CD8-positive, alpha-beta T cell (primary cell): ENCODE measurements at regions of chr3 and their contacts with region 1.

Region 1: GRCh38 chr3:156674046-156674910 is at the start of gene TIPARP:
- DNase-seq: peak; percentile 98 to 100 (median 99)
- ATAC-seq: peak; percentile 82
- H3K4me3 ChIP-seq: peak within 1 kb of the TSS; percentile 84 to 95
- H3K4me3 Mint-ChIP-seq: peak within 1 kb of the TSS; percentile 97
- H3K27ac ChIP-seq: peak within 1 kb of the TSS; percentile 79 to 89
- H3K27ac Mint-ChIP-seq: peak within 1 kb of the TSS; percentile 99
- H3K4me1 ChIP-seq: peaks cover 34% of the 10 kb centered on the region
- H3K4me1 Mint-ChIP-seq: peaks cover 47% of the 10 kb centered on the region
- H3K27me3 ChIP-seq: no peaks in the 10 kb centered on the region
- H3K27me3 Mint-ChIP-seq: no peaks in the 10 kb centered on the region
- CTCF ChIP-seq: peak; percentile 36
- total RNA-seq, gene TIPARP: 265 to 268 TPM

Region 2: GRCh38 chr3:155854141-155854940 is 819.9 kb before region 1 on chr3 and contains the start of gene SLC33A1:
- CTCF ChIA-PET with region 1: no interaction called
- POLR2A ChIA-PET with region 1: no interaction called
- intact Hi-C with region 1: loop called in 1 of 2 experiments (anchors 10 kb)
- DNase-seq: peak; percentile 96 to 100 (median 99)
- ATAC-seq: peak; percentile 89
- H3K4me3 ChIP-seq: peak within 1 kb of the TSS; percentile 85 to 92
- H3K4me3 Mint-ChIP-seq: peak within 1 kb of the TSS; percentile 98
- H3K27ac ChIP-seq: peak within 1 kb of the TSS; percentile 90 to 95
- H3K27ac Mint-ChIP-seq: peak within 1 kb of the TSS; percentile 99
- H3K4me1 ChIP-seq: peaks cover 33% of the 10 kb centered on the region
- H3K4me1 Mint-ChIP-seq: peaks cover 39% of the 10 kb centered on the region
- H3K27me3 ChIP-seq: no peaks in the 10 kb centered on the region
- H3K27me3 Mint-ChIP-seq: no peaks in the 10 kb centered on the region
- CTCF ChIP-seq: no peak
- total RNA-seq, gene SLC33A1: 12.6 to 12.9 TPM

Region 3: DNA sequence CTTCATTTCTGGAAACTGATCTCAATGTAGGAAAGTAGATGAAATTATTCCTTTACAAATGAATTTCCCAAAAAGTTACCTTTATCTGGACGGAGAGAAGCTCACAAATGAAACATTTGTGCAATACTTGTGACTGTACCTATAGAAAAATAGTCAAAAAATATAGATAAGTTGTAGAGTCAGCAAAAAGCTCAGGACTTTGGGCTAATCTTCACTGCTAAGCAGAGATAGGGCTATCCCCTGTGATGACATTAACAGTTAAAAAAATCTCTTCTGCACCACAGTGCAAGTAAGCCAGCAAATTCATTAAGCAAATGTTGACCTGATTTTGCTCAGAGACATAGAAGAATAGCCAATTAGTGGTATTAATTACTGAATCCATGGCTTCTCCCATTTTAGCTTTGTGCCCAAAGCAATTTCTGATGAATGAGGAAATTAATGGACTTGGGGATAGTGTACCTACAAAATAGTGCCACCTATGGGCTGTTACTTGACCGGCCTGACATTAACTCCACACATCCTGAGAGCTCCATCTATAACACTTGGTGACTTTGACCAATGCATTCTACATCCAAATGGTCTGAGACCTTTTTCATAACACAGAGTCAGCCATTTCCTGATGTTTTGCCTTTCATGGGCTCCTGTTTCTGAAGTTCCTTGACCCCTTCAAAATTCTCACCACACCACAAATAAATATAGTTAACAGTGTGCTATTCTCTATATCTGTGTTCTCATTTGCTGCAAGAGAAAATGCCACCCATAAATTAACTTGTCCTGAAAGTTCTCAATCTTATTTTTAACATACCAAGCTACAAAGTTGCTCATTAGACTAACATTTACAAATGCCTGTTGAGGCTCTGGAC is 224.3 kb before region 1 on chr3:
- CTCF ChIA-PET with region 1: no interaction called
- POLR2A ChIA-PET with region 1: no interaction called
- intact Hi-C with region 1: no loop called
- DNase-seq: peak in 2 of 9 experiments; percentile 16 to 29
- ATAC-seq: no peak
- H3K4me3 ChIP-seq: no peak overlapping the region
- H3K4me3 Mint-ChIP-seq: no peak overlapping the region
- H3K27ac ChIP-seq: no peak overlapping the region
- H3K27ac Mint-ChIP-seq: no peak overlapping the region
- H3K4me1 ChIP-seq: no peaks in the 10 kb centered on the region
- H3K4me1 Mint-ChIP-seq: no peaks in the 10 kb centered on the region
- H3K27me3 ChIP-seq: no peaks in the 10 kb centered on the region
- H3K27me3 Mint-ChIP-seq: no peaks in the 10 kb centered on the region
- CTCF ChIP-seq: peak; percentile 14

Region 4: GRCh38 chr3:156483961-156484787 is 190.1 kb before region 1 on chr3:
- CTCF ChIA-PET with region 1: interaction called, 3 read pairs
- POLR2A ChIA-PET with region 1: no interaction called
- intact Hi-C with region 1: loop called in 1 of 2 experiments (anchors 5 kb)
- DNase-seq: peak in 8 of 9 experiments; percentile 16 to 81 (median 58)
- ATAC-seq: peak; percentile 85
- H3K4me3 ChIP-seq: peak overlapping the region; percentile 21 to 36
- H3K4me3 Mint-ChIP-seq: peak overlapping the region; percentile 74
- H3K27ac ChIP-seq: peak overlapping the region; percentile 28 to 82
- H3K27ac Mint-ChIP-seq: peak overlapping the region; percentile 93
- H3K4me1 ChIP-seq: peaks cover 24% of the 10 kb centered on the region
- H3K4me1 Mint-ChIP-seq: peaks cover 42% of the 10 kb centered on the region
- H3K27me3 ChIP-seq: no peaks in the 10 kb centered on the region
- H3K27me3 Mint-ChIP-seq: no peaks in the 10 kb centered on the region
- CTCF ChIP-seq: no peak

Region 5: GRCh38 chr3:156691920-156692319 is 17.6 kb after region 1 on chr3:
- CTCF ChIA-PET with region 1: no interaction called
- POLR2A ChIA-PET with region 1: interaction called, 3 read pairs
- intact Hi-C with region 1: loop called in 1 of 2 experiments (anchors 2 kb)
- DNase-seq: no peak
- ATAC-seq: no peak
- H3K4me3 ChIP-seq: no peak overlapping the region
- H3K4me3 Mint-ChIP-seq: no peak overlapping the region
- H3K27ac ChIP-seq: no peak overlapping the region
- H3K27ac Mint-ChIP-seq: no peak overlapping the region
- H3K4me1 ChIP-seq: no peaks in the 10 kb centered on the region
- H3K4me1 Mint-ChIP-seq: peaks cover 52% of the 10 kb centered on the region
- H3K27me3 ChIP-seq: no peaks in the 10 kb centered on the region
- H3K27me3 Mint-ChIP-seq: no peaks in the 10 kb centered on the region
- CTCF ChIP-seq: no peak

Region 6: DNA sequence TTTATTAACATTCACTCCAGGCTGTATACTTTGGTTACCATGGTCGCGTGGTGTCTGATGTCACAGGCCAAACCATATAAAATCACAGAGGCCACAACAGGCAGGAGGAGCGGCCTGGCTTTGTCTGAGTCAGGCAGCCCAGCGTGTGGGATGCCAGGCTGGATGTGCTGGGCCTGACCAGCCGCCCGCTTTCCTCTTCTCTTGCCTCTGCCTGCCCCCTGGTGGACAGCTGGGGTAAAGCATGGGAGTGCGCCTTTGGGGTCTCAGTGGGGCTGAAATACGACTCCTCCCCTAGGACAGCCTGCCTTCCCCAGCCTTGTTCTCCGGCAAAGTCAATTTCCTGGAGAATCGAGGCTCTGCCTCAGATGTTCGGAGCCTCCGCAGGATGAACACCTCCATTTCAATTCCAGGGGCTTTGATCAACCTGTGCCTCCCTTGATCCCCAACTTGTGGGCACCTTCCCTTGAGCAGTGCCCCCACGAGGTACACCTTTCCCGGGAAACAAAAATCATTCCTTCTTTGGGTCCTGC is 407.5 kb after region 1 on chr3:
- CTCF ChIA-PET with region 1: interaction called, 24 read pairs
- POLR2A ChIA-PET with region 1: interaction called, 6 read pairs
- intact Hi-C with region 1: loop called (anchors 1 to 2 kb)
- DNase-seq: peak; percentile 74 to 94 (median 89)
- ATAC-seq: peak; percentile 96
- H3K4me3 ChIP-seq: no peak overlapping the region
- H3K4me3 Mint-ChIP-seq: no peak overlapping the region
- H3K27ac ChIP-seq: peak overlapping the region in 1 of 2 experiments; percentile 17
- H3K27ac Mint-ChIP-seq: peak overlapping the region; percentile 74
- H3K4me1 ChIP-seq: peaks cover 9% of the 10 kb centered on the region
- H3K4me1 Mint-ChIP-seq: peaks cover 11% of the 10 kb centered on the region
- H3K27me3 ChIP-seq: no peaks in the 10 kb centered on the region
- H3K27me3 Mint-ChIP-seq: no peaks in the 10 kb centered on the region
- CTCF ChIP-seq: peak; percentile 90

Region 7: DNA sequence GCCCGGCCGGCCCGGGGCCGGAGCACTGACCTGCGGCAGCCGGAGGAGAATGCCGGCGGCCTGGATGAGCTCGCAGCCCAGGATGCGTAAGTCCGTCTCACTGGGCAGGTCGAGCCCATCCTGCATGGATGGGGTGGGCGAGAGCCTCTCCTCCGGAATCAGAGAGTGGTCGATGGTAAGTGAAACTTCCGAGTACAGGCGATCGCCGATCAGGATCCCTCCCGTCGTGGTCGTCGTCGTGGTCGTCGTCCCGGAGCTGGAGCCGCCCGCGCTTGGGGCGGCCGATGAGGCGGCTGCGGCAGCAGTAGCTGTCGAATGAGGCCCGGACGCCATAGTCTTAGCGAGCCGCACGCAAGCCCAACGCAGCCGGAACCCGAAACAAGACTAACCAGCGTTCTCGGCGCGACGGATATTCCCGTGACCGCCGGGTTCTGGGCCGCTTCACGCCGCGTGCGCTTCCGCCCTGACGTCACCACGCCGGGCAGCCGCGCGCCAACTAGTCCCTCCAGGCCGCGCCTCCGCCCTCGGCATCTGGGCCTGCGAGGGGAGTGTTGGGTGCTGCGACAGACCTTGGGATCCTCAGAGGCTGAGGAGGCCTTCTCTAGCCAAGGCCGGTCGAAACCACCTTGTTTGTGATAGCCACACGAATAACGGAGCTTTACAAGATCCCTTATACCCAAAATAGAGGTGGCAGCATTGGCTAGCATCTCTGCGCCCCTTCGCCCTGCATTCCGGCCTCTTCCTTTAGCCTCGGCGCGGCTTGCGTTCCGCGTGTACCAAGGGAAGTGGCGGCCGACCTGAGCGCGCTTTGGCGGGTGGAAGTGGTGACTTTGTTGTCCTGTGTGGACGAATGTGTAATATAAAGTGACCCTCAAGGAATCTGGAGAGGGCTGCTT is 485.7 kb after region 1 on chr3 and contains the start of gene CCNL1:
- CTCF ChIA-PET with region 1: interaction called, 3 read pairs
- POLR2A ChIA-PET with region 1: interaction called, 43 read pairs
- intact Hi-C with region 1: loop called (anchors 1 to 5 kb)
- DNase-seq: peak; percentile 92 to 99 (median 95)
- ATAC-seq: peak; percentile 70
- H3K4me3 ChIP-seq: peak within 1 kb of the TSS; percentile 79 to 84
- H3K4me3 Mint-ChIP-seq: peak within 1 kb of the TSS; percentile 96
- H3K27ac ChIP-seq: peak within 1 kb of the TSS; percentile 99 to 100
- H3K27ac Mint-ChIP-seq: peak within 1 kb of the TSS; percentile 100
- H3K4me1 ChIP-seq: peaks cover 50% of the 10 kb centered on the region
- H3K4me1 Mint-ChIP-seq: peaks cover 54% of the 10 kb centered on the region
- H3K27me3 ChIP-seq: no peaks in the 10 kb centered on the region
- H3K27me3 Mint-ChIP-seq: no peaks in the 10 kb centered on the region
- CTCF ChIP-seq: no peak
- total RNA-seq, gene CCNL1: 1,161 to 1,206 TPM